WTC11 (cell line): ENCODE measurements at regions of chr5 and their contacts with region 1.

Region 1: GRCh38 chr5:138178516-138179276 is at the starts of genes BRD8 and KIF20A:
- DNase-seq: peak; percentile 96
- ATAC-seq: peak; percentile 92
- H3K4me3 Mint-ChIP-seq: no peak within 1 kb of the TSS
- H3K27ac Mint-ChIP-seq: peak within 1 kb of the TSS; percentile 63; the same call in 1 of the 2 replicates
- H3K4me1 Mint-ChIP-seq: peaks cover 13% of the 10 kb centered on the region
- H3K27me3 Mint-ChIP-seq: no peaks in the 10 kb centered on the region
- CTCF ChIP-seq: no peak
- total RNA-seq, gene BRD8: 59.6 to 73.4 TPM (median 61.4 TPM) in 3 replicates
- total RNA-seq, gene KIF20A: 66.9 to 81.9 TPM (median 68.0 TPM) in 3 replicates

Region 2: DNA sequence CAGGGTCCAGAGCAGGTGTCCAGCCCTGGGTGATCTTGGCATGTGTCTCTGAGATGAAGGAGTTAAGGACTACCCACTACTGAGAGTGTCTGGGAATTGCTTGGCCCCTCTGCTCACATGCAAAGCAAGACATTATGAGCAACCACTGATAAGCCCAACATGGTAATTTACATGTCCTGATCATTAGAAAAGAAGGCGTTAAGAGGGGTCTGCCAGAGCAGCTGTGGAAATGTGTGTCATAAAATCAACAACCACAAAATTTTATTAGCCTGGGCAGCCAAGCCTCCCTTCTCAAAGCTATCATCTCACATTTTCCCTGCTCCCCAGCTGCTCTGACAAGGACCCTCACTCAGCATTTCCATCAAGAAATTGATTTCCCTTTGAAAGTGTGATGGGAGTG is 1030.5 kb before region 1 on chr5:
- CTCF ChIA-PET with region 1: no interaction called
- POLR2A ChIA-PET with region 1: interaction called, 10 read pairs
- DNase-seq: no peak
- ATAC-seq: no peak
- H3K4me3 Mint-ChIP-seq: no peak overlapping the region
- H3K27ac Mint-ChIP-seq: no peak overlapping the region
- H3K4me1 Mint-ChIP-seq: peaks cover 30% of the 10 kb centered on the region
- H3K27me3 Mint-ChIP-seq: peaks cover 6% of the 10 kb centered on the region
- CTCF ChIP-seq: no peak

Region 3: GRCh38 chr5:138110266-138110963 is 68.3 kb before region 1 on chr5:
- CTCF ChIA-PET with region 1: no interaction called
- POLR2A ChIA-PET with region 1: no interaction called
- DNase-seq: peak; percentile 21
- ATAC-seq: peak; percentile 46; the same call in 1 of the 2 replicates
- H3K4me3 Mint-ChIP-seq: no peak overlapping the region
- H3K27ac Mint-ChIP-seq: no peak overlapping the region
- H3K4me1 Mint-ChIP-seq: peaks cover 14% of the 10 kb centered on the region
- H3K27me3 Mint-ChIP-seq: peaks cover 14% of the 10 kb centered on the region
- CTCF ChIP-seq: no peak

Region 4: DNA sequence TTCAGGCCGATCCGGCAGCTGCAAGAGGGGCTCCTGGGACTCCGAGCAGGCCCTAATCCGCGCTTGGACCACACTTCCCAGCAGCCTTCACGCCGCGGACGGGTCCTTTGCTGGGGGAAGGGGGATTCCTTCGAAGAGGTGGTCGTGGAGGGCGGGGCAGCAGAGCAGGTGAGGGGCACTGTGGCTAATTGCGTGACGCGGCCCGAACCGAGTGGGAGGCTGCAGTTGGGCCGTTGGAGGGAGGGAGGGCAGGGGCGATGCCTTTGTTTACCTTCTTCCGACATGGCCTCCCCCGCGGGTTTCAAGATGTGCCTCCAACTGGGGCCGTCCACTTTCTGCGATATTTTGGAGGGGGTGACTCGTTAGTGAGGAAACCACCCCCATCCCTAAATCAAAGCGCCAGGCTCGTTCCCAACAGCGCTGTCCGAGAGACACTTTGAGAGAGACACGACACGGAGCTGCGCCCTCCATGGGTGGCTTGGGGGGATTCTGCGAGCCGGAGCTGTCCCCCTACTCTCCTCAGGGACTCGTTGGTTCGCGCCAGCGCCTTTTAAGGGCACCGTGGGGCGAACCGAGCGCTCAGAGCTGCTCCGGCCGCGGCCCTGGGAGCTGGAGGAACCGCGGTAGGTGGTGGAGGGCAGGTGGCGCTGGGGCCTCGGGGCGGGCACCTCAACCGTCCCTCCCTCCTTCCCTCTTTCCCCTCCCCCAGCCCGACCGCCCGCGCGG is 159.2 kb after region 1 on chr5 and contains the start of gene FAM53C:
- CTCF ChIA-PET with region 1: no interaction called
- POLR2A ChIA-PET with region 1: interaction called, 11 read pairs
- DNase-seq: peak; percentile 90
- ATAC-seq: peak; percentile 83
- H3K4me3 Mint-ChIP-seq: peak within 1 kb of the TSS; percentile 92
- H3K27ac Mint-ChIP-seq: peak within 1 kb of the TSS; percentile 100
- H3K4me1 Mint-ChIP-seq: peaks cover 30% of the 10 kb centered on the region
- H3K27me3 Mint-ChIP-seq: no peaks in the 10 kb centered on the region
- CTCF ChIP-seq: no peak
- total RNA-seq, gene FAM53C: 51.3 to 56.2 TPM (median 53.0 TPM) in 3 replicates